BJ (cell line): ENCODE measurements at regions of chr4 and their contacts with region 1.

Region 1: DNA sequence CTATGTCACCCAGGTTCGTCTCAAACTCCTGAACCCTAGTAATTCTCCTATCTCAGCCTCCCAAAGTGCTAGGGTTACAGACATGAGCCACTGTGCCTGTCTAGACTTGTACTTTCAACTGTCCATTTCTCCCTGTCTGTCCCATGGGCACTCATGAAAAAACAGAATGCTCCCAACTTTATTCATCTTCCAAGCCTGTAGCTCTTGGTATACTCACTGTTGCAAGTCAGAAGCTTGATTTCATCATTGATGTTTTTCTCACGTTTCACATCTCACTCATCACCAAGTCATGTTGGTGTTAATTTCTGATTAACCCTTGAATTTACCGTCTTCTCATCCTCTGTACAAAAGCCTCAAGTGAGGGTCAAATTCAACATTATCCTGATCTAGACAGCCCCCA is 7.3 kb upstream of the SRP72 start:
- DNase-seq: no peak
- H3K4me3 ChIP-seq: no peak overlapping the region
- H3K27me3 ChIP-seq: no peaks in the 10 kb centered on the region
- CTCF ChIP-seq: no peak

Region 2: DNA sequence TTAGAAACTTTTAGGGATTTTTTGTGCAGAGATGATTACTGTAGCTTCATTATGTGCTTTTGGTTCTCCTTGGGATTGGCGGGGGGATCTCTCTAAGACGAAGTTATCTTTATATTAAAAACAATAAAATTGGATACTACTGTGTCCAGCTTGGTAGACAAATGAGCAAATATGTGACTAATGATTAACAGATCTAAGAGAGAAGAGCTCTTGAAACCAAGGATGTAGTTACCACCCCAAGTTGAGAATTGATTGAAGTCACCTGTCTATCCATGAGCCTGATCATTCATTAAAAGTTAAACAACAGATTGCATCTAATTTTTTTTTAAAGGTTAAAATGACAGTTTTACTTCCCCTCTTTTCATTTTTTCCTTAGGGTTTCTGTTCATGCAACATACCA is 15.4 kb before region 1 on chr4:
- CTCF ChIA-PET with region 1: no interaction called
- POLR2A ChIA-PET with region 1: interaction called, 13 read pairs
- DNase-seq: no peak
- H3K4me3 ChIP-seq: no peak overlapping the region
- H3K27me3 ChIP-seq: no peaks in the 10 kb centered on the region
- CTCF ChIP-seq: no peak